ENCODE measurements at regions of chr1 and their contacts with region 1.

Region 1: DNA sequence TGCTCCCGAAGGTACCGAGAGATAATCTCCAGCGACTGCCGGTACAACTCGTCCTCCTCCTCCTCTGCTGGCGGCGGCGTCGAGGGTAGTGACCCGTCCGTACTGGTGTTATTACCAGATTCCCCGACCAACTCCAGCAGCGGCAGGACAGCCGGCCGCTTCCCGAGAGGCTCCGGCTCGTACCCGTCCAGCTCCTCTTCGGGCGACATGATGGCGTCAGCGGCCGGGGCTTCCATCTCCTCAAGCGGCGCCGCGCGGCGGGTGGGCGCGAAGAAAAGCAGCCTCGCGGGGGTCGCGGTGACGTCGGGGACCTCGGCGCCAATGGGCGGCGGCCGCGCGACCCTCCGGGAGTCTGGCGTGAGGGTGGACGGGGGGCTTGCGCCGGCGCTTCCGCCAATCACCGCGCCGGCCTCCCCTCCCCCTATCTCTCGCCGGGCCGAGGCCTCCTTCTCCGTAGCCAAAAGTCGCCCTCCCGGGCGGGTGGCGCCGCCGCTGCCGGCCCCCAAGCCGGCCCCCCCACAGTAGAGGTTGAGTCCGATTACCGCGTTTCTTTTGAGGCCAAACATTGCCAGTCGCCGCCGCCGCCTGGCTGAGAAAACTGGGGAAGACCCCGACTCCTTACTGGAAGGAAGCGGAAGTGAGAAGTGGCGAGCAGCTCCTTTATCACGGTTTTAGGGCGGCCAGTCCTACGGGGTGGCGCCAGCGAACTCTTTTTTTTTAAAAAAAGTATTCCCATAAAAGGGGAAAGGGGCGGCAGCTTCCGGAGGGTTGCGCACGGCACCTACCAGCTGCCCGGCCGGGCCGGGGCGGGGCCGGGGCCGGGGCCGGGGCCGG is at the start of gene MCL1:
- DNase-seq: peak; percentile 74 to 97
- H3K4me3 ChIP-seq: peak within 1 kb of the TSS; percentile 93 to 94
- H3K27ac ChIP-seq: peak within 1 kb of the TSS; percentile 98 to 100
- H3K4me1 ChIP-seq: peaks cover 0 to 10% of the 10 kb centered on the region in 2 donors
- H3K27me3 ChIP-seq: no peaks in the 10 kb centered on the region
- CTCF ChIP-seq: peak in 1 of 3 experiments; percentile 17
- total RNA-seq, gene MCL1: 394 TPM

Region 2: DNA sequence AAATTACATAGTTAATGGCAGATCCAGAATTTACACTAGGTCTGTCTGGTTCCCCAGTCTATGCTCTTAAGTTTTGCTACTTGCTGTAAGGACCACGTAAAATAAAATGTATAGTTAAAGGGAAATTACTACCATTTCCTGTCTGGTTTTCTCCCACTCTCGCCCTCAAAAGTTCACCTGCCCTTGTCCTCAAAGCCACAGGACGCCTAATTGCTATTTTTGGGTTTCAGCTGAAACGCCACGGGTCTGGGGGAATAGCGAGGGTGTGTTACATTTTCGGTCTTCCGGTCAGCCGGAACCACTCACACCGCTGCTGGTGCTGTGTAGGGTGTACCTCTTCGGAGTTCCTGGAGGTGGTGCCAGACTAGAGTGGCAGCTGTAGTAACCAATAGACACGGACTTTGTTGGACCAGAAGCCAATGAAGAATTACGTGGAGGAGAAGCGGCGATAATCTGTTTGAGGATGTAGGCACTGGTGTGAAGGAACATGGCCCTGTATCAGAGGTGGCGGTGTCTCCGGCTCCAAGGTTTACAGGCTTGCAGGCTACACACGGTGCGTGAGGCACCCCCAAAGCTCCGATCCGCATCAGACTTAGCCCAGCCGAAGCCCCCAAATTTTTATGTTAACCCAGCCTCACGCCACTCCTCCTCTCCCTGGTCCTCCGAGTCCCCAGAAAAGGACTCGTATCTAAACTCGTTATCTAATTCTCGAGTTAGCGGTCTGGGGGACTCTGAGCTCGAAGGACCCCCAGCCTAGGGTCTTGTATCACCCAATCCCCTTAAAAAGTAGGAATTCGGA is 92.0 kb before region 1 on chr1 and contains the start of gene TARS2:
- intact Hi-C with region 1: no loop called
- DNase-seq: peak; percentile 91 to 99
- H3K4me3 ChIP-seq: peak within 1 kb of the TSS; percentile 70 to 73
- H3K27ac ChIP-seq: peak within 1 kb of the TSS; percentile 33 to 73
- H3K4me1 ChIP-seq: peaks cover 0 to 6% of the 10 kb centered on the region in 2 donors
- H3K27me3 ChIP-seq: no peaks in the 10 kb centered on the region
- CTCF ChIP-seq: peak; percentile 6 to 44 (median 27)
- total RNA-seq, gene TARS2: 10.9 TPM

Region 3: GRCh38 chr1:150561974-150562445 is 17.2 kb before region 1 on chr1:
- intact Hi-C with region 1: loop called (anchors 1 kb)
- DNase-seq: peak; percentile 78 to 96
- H3K4me3 ChIP-seq: peak overlapping the region; percentile 60 to 63
- H3K27ac ChIP-seq: peak overlapping the region; percentile 98 to 100
- H3K4me1 ChIP-seq: peaks cover 68 to 78% of the 10 kb centered on the region in 2 donors
- H3K27me3 ChIP-seq: no peaks in the 10 kb centered on the region
- CTCF ChIP-seq: no peak

Region 4: GRCh38 chr1:150603711-150604110 is 24.5 kb after region 1 on chr1:
- intact Hi-C with region 1: loop called (anchors 2 kb)
- DNase-seq: no peak
- H3K4me3 ChIP-seq: no peak overlapping the region
- H3K27ac ChIP-seq: peak overlapping the region; percentile 78 to 88
- H3K4me1 ChIP-seq: peaks cover 3 to 7% of the 10 kb centered on the region in 2 donors
- H3K27me3 ChIP-seq: no peaks in the 10 kb centered on the region
- CTCF ChIP-seq: no peak

Region 5: DNA sequence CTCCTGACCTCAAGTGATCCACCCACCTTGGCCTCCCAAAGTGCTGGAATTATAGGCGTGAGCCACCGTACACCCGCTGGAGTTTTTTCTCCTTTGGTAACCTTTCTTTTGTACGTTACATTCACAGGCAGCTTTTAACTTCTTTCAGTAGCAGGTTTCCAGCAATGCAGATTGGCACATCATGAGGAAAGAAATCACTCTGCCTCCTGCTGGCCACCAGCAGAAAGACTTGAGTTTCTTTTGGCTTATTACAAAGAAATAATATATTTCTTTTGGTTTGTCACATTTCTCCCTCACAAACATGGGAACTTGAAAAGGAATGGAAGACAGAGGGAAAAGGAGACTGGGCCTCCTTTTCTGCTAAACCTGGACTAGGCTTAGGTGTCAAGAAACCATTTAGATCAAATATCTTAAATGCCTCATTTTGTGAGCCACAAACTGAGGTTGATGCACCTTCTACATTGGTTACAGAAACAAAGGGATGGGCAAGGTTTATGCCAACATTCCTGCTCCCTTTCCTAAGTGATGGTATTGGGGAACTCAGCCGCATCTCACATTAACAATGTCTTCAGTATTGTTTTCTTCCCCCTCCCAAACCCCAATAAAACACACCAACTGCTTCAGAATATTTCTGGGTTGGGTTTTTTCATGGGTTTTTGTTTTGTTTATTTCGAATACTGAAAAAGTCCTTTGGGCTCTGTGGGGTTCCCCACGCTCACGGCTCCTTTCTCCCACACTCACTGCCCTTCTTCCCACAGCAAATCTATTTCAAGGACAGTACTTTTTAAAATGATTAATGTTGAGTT is 42.5 kb after region 1 on chr1:
- intact Hi-C with region 1: loop called (anchors 2 kb)
- DNase-seq: peak in 1 of 2 donors; percentile 84
- H3K4me3 ChIP-seq: no peak overlapping the region
- H3K27ac ChIP-seq: peak overlapping the region; percentile 71 to 74
- H3K4me1 ChIP-seq: peaks cover 10 to 31% of the 10 kb centered on the region in 2 donors
- H3K27me3 ChIP-seq: no peaks in the 10 kb centered on the region
- CTCF ChIP-seq: peak; percentile 72 to 74 (median 72)

Measured in ascending aorta (tissue), 2 donors.